ENCODE measurements at regions of chr1 and their contacts with region 1.

Region 1: DNA sequence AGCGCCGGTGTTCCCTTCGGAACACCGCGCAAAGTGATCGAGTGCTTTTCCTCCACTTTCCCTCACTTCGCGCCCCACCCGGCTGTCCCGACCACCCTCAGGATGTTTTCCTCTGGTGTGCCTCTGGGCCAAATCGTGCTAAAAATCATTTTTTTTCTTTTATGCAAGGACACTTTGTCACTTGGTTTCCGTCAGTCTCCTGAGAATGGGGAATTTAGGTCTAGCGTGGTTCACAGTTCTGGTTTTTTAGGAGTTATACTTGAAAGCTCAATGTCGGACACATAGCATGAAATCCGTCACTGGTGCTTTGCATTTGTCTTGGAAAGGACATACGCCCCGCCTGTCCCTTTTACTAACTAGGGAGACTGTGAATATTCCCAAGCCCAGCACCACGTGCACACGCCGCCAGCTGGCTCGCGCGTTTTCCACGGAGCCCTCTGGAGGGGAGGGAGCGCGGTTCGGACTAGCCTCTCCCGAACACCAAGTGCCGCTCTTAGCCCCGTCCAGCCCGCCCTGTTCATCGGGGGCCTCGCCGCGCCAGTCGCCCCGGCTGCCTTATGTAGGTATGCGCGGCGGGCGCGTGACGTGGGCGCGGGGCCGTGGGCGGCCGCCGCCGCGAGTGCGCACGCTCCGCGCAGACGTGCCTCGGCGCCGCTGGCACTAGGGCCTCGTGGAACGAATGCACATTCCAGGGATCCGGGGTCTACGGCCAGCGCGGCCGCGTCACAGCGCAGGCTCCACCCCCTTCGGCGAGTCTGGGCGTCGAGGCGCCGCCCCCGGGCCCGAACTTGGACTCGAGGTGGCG is 572 bp upstream of the IRF2BP2 start:
- DNase-seq: peak; percentile 81 to 96 (median 91)
- ATAC-seq: peak; percentile 37 to 51
- H3K4me3 Mint-ChIP-seq: peak overlapping the region; percentile 86 to 97 (median 94)
- H3K27ac Mint-ChIP-seq: peak overlapping the region; percentile 95 to 100 (median 100)
- H3K4me1 Mint-ChIP-seq: peaks cover 41 to 63% (median 57%) of the 10 kb centered on the region in 4 donors
- H3K27me3 Mint-ChIP-seq: peaks cover 0 to 1% (median 0%) of the 10 kb centered on the region in 5 donors

Region 2: DNA sequence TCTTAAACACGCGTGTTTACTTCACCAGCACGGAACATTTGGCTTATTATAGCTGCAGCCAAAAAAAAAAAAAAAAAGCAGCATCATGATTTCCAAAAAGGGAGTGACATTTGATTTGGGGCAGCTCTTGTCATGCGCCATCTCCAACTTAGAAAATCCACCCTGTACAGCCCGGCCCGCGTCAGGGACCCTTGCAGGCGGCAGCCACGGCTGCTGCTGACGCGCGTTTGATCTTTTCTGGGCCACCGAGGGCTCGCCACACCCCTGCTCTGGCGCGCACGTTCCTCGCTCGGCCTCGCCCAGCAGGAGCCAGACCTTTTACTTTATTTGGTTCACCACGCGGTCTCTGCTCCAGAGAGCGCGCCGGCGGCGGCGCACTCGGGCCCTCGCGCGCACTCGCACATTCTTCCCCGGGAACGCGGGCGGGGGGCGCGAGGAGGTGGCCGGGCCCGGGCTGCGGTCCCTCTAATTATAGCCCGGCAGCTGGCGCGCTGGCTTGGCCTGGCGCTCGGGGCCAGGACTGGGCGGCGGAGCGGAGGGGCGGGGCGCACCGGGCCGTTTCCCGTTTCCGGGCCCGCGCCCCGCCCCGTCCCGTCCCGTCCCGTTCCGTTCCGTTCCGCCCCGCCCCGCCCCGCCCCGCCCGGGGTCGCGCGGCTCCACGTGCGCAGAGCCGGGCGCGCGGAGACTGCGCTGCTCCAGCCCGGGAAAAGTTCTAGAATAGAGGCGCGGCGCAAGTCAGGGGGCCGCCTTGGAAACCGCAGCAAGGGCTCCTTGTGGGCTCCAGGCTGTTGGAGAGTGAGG is 10.7 kb before region 1 on chr1:
- POLR2A ChIA-PET with region 1: interaction called, 193 read pairs
- DNase-seq: peak; percentile 56 to 86 (median 73)
- ATAC-seq: peak; percentile 61 to 72
- H3K4me3 Mint-ChIP-seq: peak overlapping the region; percentile 78 to 93 (median 89)
- H3K27ac Mint-ChIP-seq: peak overlapping the region; percentile 74 to 98 (median 96)
- H3K4me1 Mint-ChIP-seq: peaks cover 14 to 62% (median 46%) of the 10 kb centered on the region in 4 donors
- H3K27me3 Mint-ChIP-seq: no peaks in the 10 kb centered on the region

Region 3: GRCh38 chr1:234722904-234723720 is 112.6 kb after region 1 on chr1:
- POLR2A ChIA-PET with region 1: interaction called, 217 read pairs
- DNase-seq: peak in 5 of 10 donors; percentile 38 to 73 (median 48)
- ATAC-seq: peak; percentile 7 to 18
- H3K4me3 Mint-ChIP-seq: peak overlapping the region; percentile 72 to 89 (median 85)
- H3K27ac Mint-ChIP-seq: peak overlapping the region; percentile 93 to 100 (median 98)
- H3K4me1 Mint-ChIP-seq: peaks cover 42 to 73% (median 67%) of the 10 kb centered on the region in 4 donors
- H3K27me3 Mint-ChIP-seq: peaks cover 0 to 3% (median 0%) of the 10 kb centered on the region in 5 donors

Region 4: GRCh38 chr1:234844479-234845031 is 234.0 kb after region 1 on chr1:
- POLR2A ChIA-PET with region 1: interaction called, 14 read pairs
- DNase-seq: peak in 3 of 10 donors; percentile 18 to 49 (median 41)
- ATAC-seq: peak; percentile 31 to 44
- H3K4me3 Mint-ChIP-seq: peak overlapping the region; percentile 33 to 82 (median 74)
- H3K27ac Mint-ChIP-seq: peak overlapping the region; percentile 64 to 91 (median 76)
- H3K4me1 Mint-ChIP-seq: peaks cover 33 to 65% (median 56%) of the 10 kb centered on the region in 4 donors
- H3K27me3 Mint-ChIP-seq: no peaks in the 10 kb centered on the region

Region 5: DNA sequence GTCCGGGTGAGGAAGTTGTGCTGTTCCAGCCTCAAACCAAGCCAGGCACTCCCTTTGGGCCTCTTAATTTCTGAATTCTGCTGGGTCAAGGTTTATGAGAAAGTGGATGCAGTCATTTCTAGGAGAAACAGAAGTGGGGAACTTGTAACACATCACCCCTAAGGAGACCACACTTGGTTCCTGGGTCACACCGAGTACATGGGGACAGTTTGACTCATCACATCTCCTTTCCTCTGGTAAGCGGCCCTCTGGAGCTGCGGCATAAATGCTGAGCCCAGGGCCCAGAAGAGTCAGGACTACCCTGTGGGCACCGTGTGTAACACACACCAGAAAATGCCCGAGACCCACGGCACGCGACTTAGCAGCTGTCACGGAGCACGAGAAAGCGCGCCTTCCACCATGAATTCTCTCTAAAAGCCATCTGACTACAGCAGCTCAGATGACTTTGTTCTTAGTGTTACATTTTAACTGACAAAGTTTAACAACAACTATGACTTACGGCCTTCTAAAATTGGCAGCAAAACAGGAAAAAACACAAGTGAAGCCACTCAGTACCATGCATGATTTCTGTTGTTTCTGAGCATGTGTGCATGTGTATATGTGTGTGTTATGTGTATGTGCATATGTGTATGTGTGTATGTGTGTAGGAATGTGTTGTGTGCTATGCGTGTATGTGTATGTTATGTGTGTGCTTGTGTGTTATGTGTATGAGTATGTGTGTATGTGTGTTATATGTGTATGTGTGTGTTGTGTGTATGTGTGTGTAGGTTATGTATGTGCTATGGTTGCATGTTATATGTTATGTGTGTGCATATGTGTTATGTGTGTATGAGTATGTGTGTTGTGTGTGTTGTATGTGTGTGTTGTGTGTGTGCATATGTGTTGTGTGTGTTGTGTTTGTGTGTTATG is 467.3 kb after region 1 on chr1:
- POLR2A ChIA-PET with region 1: interaction called, 13 read pairs
- DNase-seq: no peak
- ATAC-seq: no peak
- H3K4me3 Mint-ChIP-seq: no peak overlapping the region
- H3K27ac Mint-ChIP-seq: peak overlapping the region in 1 of 10 donors; percentile 46
- H3K4me1 Mint-ChIP-seq: peaks cover 0 to 42% (median 4%) of the 10 kb centered on the region in 4 donors
- H3K27me3 Mint-ChIP-seq: peaks cover 0 to 2% (median 0%) of the 10 kb centered on the region in 5 donors

Measured in naive thymus-derived CD8-positive, alpha-beta T cell (primary cell).